PC-9 (cell line): ENCODE measurements at regions of chr11 and their contacts with region 1.

Region 1: DNA sequence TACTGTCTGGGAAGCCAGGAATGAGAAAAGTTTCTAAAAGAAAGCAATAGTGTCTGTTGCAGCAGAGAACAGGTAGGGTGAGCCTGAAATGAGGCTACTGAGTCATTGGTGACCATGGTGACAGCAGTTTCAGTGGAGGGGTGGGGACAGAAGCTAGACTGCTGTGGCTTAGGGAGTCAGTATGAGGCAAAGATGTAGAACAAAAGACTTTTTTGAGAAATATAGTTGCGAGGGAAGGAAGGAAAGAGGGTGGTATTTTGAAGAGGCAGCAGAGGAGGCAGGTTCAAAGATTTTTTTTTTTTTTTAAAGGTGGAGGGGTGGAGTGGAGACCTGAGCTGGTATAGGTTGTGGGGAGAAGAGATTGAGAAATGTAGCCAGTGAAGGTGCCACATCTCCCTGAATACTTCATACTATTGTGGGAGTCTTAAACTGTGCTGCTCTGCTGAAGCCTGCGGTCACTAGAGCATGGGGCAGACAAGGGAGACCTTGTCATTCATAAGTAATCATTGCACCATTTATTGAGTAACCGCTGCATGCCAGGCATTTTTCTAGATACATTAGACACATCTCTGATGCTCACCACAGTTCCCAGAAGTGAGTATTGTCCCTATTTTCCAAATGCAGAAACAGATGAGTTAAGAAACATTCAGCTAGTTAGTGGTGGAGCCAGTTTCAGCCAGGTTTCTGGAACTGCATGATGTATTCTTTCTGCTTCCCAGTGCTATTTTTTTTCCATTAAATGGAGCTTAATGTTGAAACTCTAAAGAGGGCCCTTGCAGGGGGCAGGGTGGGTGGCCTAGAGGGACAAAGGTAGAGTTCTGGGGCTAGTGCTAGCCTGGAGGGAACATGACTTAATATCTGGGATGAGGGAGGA is 49.9 kb downstream of the STIM1 start:
- DNase-seq: peak; percentile 67 to 95
- H3K4me3 ChIP-seq: peak overlapping the region; percentile 54; the same call in 1 of the 2 replicates
- H3K27ac ChIP-seq: peak overlapping the region; percentile 100
- H3K4me1 ChIP-seq: peaks cover 78% of the 10 kb centered on the region
- H3K27me3 ChIP-seq: no peaks in the 10 kb centered on the region
- CTCF ChIP-seq: no peak

Region 2: DNA sequence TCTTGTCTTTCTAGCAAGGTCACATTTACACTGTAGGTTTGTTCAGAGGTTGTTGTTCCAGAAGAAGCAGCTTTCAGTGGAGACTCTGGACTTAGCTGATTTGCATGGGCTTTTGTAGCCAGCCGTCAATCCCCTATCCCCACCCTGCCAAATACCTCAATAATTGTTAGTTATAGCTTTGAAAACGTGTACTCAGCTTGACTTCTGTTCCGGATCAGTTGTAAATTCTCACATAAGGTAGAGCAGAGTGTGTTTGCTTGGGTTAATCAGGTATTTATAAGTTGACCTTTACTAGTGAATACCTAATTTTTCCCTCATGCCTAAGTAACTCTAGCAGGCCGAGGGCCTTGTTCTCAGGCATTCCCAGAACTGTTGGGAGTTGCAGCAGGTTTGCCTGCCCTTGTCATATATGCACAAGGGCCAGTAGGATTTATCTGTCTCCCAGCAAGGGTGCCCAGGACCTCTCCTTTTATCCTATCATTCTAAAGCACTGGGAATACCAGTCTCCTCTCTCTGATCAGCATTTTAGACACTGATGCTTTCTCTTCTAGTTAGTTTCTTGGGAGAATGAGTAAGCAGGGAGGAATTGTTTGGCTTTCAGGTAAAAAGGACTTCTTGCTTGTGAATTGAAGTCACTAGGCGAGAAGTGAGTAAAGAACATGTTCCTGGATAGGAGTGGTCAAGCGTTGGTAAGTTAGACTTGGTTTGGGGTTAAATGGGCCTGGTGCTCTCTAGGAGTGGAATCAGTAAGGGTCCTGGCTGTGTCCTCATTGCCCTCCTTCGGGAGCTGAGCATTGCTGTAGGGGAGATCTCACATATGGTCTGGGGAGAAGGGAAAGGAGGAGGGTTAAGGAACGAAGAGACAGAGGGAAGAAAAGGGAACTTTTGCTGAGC is 27.7 kb before region 1 on chr11:
- CTCF ChIA-PET with region 1: no interaction called
- POLR2A ChIA-PET with region 1: interaction called, 4 read pairs
- intact Hi-C with region 1: loop called (anchors 1 kb)
- DNase-seq: peak in 1 of 2 experiments; percentile 84
- H3K4me3 ChIP-seq: no peak overlapping the region; the same call in 1 of the 2 replicates
- H3K27ac ChIP-seq: peak overlapping the region; percentile 94
- H3K4me1 ChIP-seq: peaks cover 28% of the 10 kb centered on the region
- H3K27me3 ChIP-seq: no peaks in the 10 kb centered on the region
- CTCF ChIP-seq: no peak

Region 3: DNA sequence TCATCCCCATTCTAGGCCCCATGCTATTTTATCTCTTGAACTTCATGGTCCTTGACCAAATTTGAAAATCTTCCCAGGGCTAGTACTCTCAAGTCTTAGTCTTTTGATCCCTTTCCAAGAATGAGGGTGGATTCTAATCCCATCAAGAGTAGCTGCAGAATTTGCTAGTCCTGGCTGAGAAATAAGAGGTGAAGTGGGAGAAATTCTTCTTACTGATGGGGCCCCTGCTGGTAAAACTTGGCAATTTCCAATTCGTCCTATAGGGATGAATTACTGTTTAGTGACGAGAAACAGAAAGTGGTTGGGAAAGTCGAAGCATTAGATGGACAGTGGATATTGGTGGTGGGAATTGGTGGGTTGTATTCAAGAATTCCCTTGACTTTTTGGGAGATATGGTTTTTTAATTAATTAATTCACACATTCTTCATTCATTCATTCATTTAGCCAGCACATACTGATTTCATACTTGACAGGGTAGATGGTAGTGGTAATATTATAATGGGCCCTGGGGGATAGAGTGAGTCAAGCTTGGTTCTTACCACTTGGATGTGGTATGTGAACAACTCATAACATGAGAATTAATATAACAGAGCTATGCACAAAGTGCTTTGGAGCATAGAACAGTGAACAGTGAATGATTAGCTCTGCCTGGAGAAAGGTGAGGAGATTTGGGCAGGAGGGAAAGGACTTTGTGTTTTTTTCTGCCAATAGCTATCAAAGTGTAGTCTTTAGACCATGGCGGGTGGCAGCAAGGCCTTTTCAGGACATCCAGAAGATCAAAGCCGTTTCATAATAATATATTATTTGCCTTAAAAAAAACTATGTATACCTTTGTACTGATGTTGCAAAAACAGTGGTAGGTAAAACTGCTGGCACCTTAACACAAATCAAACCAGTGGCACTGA is 54.0 kb after region 1 on chr11:
- CTCF ChIA-PET with region 1: no interaction called
- POLR2A ChIA-PET with region 1: no interaction called
- intact Hi-C with region 1: loop called (anchors 5 kb)
- DNase-seq: no peak
- H3K4me3 ChIP-seq: no peak overlapping the region
- H3K27ac ChIP-seq: peak overlapping the region; percentile 12; the same call in 1 of the 2 replicates
- H3K4me1 ChIP-seq: peaks cover 18% of the 10 kb centered on the region
- H3K27me3 ChIP-seq: no peaks in the 10 kb centered on the region
- CTCF ChIP-seq: 0 out of 2 replicates have a peak, but pooled peaks have one; percentile 15